MCF 10A (cell line): ENCODE measurements at regions of chr17 and their contacts with region 1.

Region 1: GRCh38 chr17:32877164-32877764 is 340 bp upstream of the MYO1D start:
- DNase-seq: peak; percentile 86
- H3K4me3 Mint-ChIP-seq: peak overlapping the region; percentile 77
- H3K27ac Mint-ChIP-seq: peak overlapping the region; percentile 52
- H3K4me1 Mint-ChIP-seq: peaks cover 17% of the 10 kb centered on the region
- H3K27me3 Mint-ChIP-seq: no peaks in the 10 kb centered on the region
- CTCF ChIP-seq: peak; percentile 93

Region 2: DNA sequence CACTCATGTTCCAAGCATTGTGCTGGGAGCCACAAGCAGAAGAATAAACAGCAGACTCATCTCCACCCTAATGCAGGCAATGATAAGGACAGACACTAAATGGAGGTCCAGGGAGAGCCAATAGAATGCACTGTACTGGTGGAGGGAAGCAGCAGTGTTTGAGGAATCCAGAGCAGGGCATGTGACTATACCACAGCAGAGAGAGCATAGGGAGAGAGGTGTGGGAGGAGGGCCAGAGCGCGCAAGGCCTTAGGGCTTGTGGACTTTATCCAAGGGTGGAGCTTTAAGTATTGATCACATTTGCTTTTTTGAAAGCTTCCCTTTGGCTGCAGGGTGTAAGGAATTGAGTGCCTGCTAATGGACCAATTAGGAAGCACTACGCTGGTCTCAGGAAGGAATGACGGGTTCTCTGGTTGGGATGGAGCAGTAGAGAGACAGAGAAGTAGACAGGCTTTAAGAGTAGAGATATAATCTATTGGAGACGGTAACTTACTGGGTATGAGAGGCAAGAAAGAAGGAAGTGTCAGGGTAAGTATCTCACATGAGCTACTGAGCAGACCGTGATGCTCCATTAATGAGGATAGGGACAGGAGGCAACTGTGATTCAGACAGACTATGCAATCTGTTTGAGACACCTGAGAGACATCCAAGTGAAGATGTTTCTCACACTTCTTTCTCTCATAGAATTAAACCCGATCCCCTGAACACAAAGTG is 82.6 kb before region 1 on chr17:
- CTCF ChIA-PET with region 1: interaction called, 59 read pairs
- POLR2A ChIA-PET with region 1: interaction called, 7 read pairs
- intact Hi-C with region 1: no loop called
- DNase-seq: no peak
- H3K4me3 Mint-ChIP-seq: no peak overlapping the region
- H3K27ac Mint-ChIP-seq: no peak overlapping the region
- H3K4me1 Mint-ChIP-seq: peaks cover 6% of the 10 kb centered on the region
- H3K27me3 Mint-ChIP-seq: no peaks in the 10 kb centered on the region
- CTCF ChIP-seq: no peak

Region 3: DNA sequence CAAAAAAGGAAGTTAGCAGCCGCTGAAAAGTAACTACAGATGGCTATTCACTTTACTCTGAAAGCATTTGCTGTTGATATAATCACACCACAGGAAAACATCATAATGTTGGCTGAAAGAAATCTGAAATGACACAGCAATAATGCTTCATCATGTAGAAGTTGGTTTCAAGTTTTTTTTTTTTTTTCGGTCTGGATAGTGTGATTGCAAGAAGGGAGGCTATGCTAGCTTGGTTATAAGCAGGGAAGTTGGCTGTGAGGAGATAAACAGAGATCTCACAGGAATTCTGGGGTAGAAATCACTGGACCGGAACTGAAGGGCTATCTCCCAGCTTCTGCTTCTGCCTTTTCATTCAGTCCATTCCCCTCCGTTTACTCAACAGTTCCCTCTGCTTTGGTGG is 58.2 kb before region 1 on chr17:
- CTCF ChIA-PET with region 1: interaction called, 53 read pairs
- POLR2A ChIA-PET with region 1: interaction called, 3 read pairs
- intact Hi-C with region 1: no loop called
- DNase-seq: no peak
- H3K4me3 Mint-ChIP-seq: no peak overlapping the region
- H3K27ac Mint-ChIP-seq: peak overlapping the region; percentile 62
- H3K4me1 Mint-ChIP-seq: no peaks in the 10 kb centered on the region
- H3K27me3 Mint-ChIP-seq: no peaks in the 10 kb centered on the region
- CTCF ChIP-seq: no peak

Region 4: DNA sequence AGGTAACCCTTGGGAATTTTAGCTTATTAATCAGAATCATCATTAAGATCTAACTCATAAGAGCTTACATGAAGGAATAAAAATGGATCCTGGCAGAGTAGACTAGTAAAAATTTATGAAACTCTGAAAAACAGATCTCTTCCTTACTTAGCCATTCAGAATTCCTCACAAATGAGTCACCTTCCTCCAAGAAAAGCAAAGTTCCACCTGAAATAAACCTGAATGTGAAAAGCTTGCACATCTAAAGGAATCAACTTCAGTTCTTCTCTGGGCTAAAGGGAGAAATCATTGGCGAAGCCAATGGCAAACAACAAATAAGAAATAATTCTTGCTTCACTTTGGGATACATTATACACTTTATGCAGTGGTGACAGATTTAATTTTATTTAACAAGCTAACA is 23.1 kb before region 1 on chr17:
- CTCF ChIA-PET with region 1: interaction called, 23 read pairs
- POLR2A ChIA-PET with region 1: interaction called, 19 read pairs
- intact Hi-C with region 1: no loop called
- DNase-seq: peak; percentile 17
- H3K4me3 Mint-ChIP-seq: no peak overlapping the region
- H3K27ac Mint-ChIP-seq: peak overlapping the region; percentile 33
- H3K4me1 Mint-ChIP-seq: peaks cover 15% of the 10 kb centered on the region
- H3K27me3 Mint-ChIP-seq: no peaks in the 10 kb centered on the region
- CTCF ChIP-seq: no peak

Region 5: DNA sequence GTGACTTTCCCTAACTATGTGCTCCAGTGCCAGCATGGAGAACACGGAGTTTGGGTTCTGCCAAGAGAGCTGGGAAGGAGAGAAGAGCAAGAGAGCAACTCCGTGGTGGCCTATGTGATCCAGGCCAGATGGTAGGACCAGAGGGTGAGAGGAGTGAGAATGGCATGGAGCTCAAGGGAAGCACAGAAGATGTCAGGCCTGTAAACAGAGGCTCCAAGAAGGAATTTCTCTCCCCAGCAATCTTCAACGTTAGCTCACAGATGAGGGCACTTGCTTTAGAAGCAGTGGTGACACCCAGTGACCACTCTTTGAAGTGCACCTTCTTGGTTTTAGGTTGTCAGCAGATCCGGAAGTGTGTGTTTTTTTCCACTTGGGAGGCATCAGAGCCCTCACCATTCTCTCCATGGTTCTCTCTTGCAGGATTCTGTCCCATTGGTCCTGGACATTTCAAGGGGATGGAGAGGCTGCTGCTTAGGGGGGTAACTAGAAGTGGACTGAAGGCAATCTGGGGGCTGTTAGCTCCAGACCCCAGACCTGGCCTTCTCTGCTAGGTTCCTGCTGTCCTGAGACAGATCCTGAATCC is 32.6 kb after region 1 on chr17:
- CTCF ChIA-PET with region 1: interaction called, 58 read pairs
- POLR2A ChIA-PET with region 1: interaction called, 22 read pairs
- intact Hi-C with region 1: loop called (anchors 5 kb)
- DNase-seq: peak; percentile 78
- H3K4me3 Mint-ChIP-seq: no peak overlapping the region
- H3K27ac Mint-ChIP-seq: no peak overlapping the region
- H3K4me1 Mint-ChIP-seq: peaks cover 5% of the 10 kb centered on the region
- H3K27me3 Mint-ChIP-seq: no peaks in the 10 kb centered on the region
- CTCF ChIP-seq: peak; percentile 64

Region 6: GRCh38 chr17:32997753-32998632 is 120.7 kb after region 1 on chr17:
- CTCF ChIA-PET with region 1: interaction called, 3 read pairs
- POLR2A ChIA-PET with region 1: no interaction called
- intact Hi-C with region 1: loop called (anchors 10 kb)
- DNase-seq: peak; percentile 79
- H3K4me3 Mint-ChIP-seq: peak overlapping the region; percentile 61
- H3K27ac Mint-ChIP-seq: no peak overlapping the region
- H3K4me1 Mint-ChIP-seq: peaks cover 7% of the 10 kb centered on the region
- H3K27me3 Mint-ChIP-seq: no peaks in the 10 kb centered on the region
- CTCF ChIP-seq: peak; percentile 87